Left cardiac atrium (tissue), 4 donors: ENCODE measurements at regions of chr6 and their contacts with region 1.

Region 1: DNA sequence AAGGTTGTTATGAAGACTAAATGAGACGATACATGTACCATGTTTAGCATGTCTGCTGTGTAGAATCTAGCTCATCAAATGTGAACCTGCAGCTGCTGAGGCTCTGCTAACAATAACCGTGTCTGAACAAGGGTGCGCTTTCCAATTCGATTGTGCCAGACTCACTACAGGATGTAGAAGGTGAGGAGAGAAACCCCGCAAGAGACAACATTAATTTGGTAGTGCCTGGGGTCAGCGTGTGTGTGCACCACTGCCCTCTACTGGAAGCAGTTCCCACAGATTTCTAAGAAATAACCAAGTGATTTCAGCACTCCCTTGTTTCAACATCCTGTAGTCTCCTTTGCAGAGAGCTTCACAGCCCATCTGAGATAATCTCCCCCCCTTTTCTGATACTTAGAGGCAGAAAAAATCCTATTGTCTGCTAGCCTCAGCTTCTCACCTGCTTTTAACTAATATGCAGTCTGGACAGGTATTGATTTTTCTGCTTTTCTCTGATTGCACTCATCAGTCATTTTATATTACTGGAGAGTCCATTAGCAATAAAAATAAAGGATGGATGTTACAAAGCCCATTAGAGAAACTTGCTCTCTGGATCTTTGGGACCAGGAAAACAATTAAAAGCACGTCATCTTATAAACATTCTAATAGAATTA is 96.7 kb upstream of the BACH2 start:
- DNase-seq: peak; percentile 47
- ATAC-seq: peak; percentile 55 to 75

Region 2: GRCh38 chr6:89940225-89941027 is 452.9 kb before region 1 on chr6:
- intact Hi-C with region 1: loop called in 1 of 2 experiments (anchors 5 kb)
- DNase-seq: peak; percentile 72
- ATAC-seq: peak; percentile 93 to 95

Region 3: GRCh38 chr6:90285611-90286381 is 107.6 kb before region 1 on chr6:
- intact Hi-C with region 1: loop called (anchors 5 to 10 kb)
- DNase-seq: peak; percentile 85
- ATAC-seq: peak; percentile 99